CD4-positive, alpha-beta T cell (primary cell): ENCODE measurements at regions of chr20 and their contacts with region 1.

Region 1: GRCh38 chr20:57596998-57597939 is 23.0 kb downstream of the ZBP1 start:
- DNase-seq: peak; percentile 58 to 88 (median 71)
- ATAC-seq: peak; percentile 85
- H3K4me3 ChIP-seq: peak overlapping the region; percentile 20
- H3K4me3 Mint-ChIP-seq: no peak overlapping the region
- H3K27ac ChIP-seq: no peak overlapping the region
- H3K27ac Mint-ChIP-seq: no peak overlapping the region
- H3K4me1 ChIP-seq: peaks cover 16% of the 10 kb centered on the region
- H3K4me1 Mint-ChIP-seq: no peaks in the 10 kb centered on the region
- H3K27me3 ChIP-seq: no peaks in the 10 kb centered on the region
- H3K27me3 Mint-ChIP-seq: peaks cover 5% of the 10 kb centered on the region
- CTCF ChIP-seq: peak; percentile 94

Region 2: DNA sequence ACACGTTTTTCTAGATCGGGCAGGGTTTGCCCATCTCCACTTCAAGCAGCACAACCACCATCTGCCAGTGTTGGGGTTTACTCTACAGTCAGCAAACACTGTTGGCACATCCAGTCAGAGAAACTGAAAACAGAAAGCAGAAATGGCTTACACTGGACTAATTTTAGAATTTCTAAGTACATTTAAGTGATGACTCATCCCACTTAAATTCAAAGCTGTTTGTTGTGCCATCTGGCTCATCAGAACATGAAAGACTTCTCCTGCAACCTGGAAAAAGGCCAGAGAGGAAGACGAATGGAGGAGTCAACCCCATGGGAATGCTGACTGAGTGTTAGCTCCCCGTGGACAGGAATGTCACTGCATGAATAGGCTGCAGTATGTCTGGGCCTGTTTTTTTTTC is 1042.4 kb before region 1 on chr20:
- CTCF ChIA-PET with region 1: interaction called, 3 read pairs
- POLR2A ChIA-PET with region 1: no interaction called
- intact Hi-C with region 1: loop called (anchors 2 kb)
- DNase-seq: peak in 3 of 14 experiments; percentile 16 to 29 (median 23)
- ATAC-seq: no peak
- H3K4me3 ChIP-seq: no peak overlapping the region
- H3K4me3 Mint-ChIP-seq: no peak overlapping the region
- H3K27ac ChIP-seq: no peak overlapping the region
- H3K27ac Mint-ChIP-seq: no peak overlapping the region
- H3K4me1 ChIP-seq: no peaks in the 10 kb centered on the region
- H3K4me1 Mint-ChIP-seq: no peaks in the 10 kb centered on the region
- H3K27me3 ChIP-seq: no peaks in the 10 kb centered on the region
- H3K27me3 Mint-ChIP-seq: no peaks in the 10 kb centered on the region
- CTCF ChIP-seq: no peak

Region 3: DNA sequence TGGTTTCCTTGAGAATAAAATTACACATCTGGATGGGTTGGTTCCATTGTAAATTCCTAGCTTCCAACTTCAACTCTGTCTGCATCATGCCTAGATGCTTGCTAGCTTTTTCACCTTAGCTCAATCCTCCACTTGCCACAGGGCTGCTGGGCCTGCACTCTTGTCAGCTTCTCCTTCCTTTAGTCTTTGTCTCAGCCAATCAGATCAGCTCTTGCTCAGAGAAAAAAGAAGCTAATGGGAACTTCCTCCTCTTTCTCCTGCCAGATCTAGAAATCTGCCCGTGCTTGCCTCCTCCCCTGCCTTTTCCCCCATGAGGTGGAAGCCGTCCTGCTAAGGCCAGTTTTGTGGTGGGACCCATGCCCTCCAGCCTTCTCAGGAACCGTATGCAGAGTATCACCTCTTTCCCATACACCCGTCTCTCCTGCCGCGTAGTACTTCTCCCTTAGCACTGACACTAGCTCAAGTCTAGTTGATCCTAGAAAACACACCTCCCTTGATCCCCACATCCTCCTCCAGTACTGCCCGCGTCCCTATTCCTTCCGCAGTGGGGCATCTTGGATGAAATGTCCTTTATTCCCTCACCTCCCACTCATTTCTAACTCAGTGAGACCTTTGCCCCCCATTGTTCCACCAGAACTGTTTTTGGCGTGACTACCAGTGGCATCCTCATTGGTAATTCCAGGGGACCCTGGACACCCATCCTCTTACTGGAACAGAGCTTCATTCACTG is 227.5 kb before region 1 on chr20:
- CTCF ChIA-PET with region 1: no interaction called
- POLR2A ChIA-PET with region 1: no interaction called
- intact Hi-C with region 1: no loop called
- DNase-seq: no peak
- ATAC-seq: no peak
- H3K4me3 ChIP-seq: no peak overlapping the region
- H3K4me3 Mint-ChIP-seq: no peak overlapping the region
- H3K27ac ChIP-seq: no peak overlapping the region
- H3K27ac Mint-ChIP-seq: no peak overlapping the region
- H3K4me1 ChIP-seq: peaks cover 8% of the 10 kb centered on the region
- H3K4me1 Mint-ChIP-seq: peaks cover 16% of the 10 kb centered on the region
- H3K27me3 ChIP-seq: no peaks in the 10 kb centered on the region
- H3K27me3 Mint-ChIP-seq: no peaks in the 10 kb centered on the region
- CTCF ChIP-seq: no peak

Region 4: DNA sequence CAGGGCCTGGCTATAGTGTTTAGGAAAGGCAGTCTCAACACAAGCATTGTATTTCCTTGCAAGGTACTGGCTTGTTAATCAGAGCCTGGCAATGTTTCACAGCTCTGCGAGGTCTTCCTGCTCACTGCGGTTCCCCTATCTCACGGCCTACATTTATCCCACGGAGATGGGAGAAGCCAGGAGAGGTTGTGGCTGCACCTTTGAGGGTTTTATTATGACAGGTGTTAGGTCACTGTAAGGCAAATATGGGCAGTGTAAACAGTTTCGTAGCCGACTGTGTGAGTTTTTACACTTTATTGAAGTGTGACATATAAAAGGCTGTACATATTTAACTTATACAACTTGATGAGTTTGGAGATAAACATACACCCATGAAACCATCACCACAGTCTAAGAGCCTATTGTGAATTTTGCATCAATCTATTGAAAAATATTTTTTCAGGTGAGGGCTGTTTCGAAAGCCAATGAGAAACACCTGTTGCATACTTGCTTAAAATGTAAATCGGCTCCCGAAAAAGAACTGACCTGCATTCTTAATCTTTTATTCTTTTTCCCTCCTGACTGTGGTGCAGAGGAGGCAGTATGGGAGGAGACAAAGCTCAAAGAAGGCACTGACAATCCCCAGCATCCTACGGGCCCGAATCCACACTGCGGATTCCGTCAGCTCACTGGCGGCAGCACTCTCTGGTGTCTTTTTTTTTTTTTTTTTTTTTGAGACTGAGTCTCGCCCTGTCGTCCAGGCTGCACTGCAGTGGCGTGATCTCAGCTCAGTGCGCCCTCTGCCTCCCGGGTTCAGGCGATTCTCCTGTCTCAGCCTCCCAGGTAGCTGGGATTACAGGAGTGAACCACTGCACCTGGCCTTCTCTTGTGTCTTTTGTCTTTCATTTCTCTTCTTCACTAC is 213.6 kb before region 1 on chr20:
- CTCF ChIA-PET with region 1: interaction called, 3 read pairs
- POLR2A ChIA-PET with region 1: no interaction called
- intact Hi-C with region 1: loop called (anchors 2 to 5 kb)
- DNase-seq: peak in 1 of 14 experiments; percentile 30
- ATAC-seq: no peak
- H3K4me3 ChIP-seq: no peak overlapping the region
- H3K4me3 Mint-ChIP-seq: no peak overlapping the region
- H3K27ac ChIP-seq: no peak overlapping the region
- H3K27ac Mint-ChIP-seq: no peak overlapping the region
- H3K4me1 ChIP-seq: peaks cover 16% of the 10 kb centered on the region
- H3K4me1 Mint-ChIP-seq: peaks cover 23% of the 10 kb centered on the region
- H3K27me3 ChIP-seq: no peaks in the 10 kb centered on the region
- H3K27me3 Mint-ChIP-seq: no peaks in the 10 kb centered on the region
- CTCF ChIP-seq: no peak

Region 5: DNA sequence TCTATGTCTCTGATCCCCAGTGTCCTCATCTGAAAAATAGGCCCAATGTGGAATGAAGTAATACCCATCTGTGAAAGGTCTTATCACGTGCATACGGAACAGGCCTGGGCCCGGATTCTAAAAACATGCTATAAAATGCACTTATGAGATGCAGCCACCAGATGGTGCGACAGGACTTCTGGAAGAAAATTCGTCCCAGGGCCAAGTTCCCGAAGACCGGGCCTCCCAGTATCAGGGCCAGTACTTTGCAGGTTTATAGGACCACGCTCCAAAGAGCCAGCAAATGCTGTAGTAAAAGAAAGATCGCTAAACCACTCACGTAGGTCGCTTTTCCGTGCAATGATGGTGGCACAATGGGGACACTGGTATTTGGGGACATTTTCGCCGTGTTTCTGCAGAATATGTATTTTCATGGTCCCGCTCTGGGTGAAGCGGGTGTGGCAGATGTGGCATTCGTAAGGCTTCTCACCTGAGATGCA is 83.0 kb before region 1 on chr20:
- CTCF ChIA-PET with region 1: no interaction called
- POLR2A ChIA-PET with region 1: no interaction called
- intact Hi-C with region 1: loop called (anchors 5 kb)
- DNase-seq: peak in 7 of 14 experiments; percentile 5 to 63 (median 27)
- ATAC-seq: no peak
- H3K4me3 ChIP-seq: no peak overlapping the region
- H3K4me3 Mint-ChIP-seq: no peak overlapping the region
- H3K27ac ChIP-seq: no peak overlapping the region
- H3K27ac Mint-ChIP-seq: no peak overlapping the region
- H3K4me1 ChIP-seq: no peaks in the 10 kb centered on the region
- H3K4me1 Mint-ChIP-seq: no peaks in the 10 kb centered on the region
- H3K27me3 ChIP-seq: peaks cover 7 to 9% of the 10 kb centered on the region in 2 experiments
- H3K27me3 Mint-ChIP-seq: peaks cover 19% of the 10 kb centered on the region
- CTCF ChIP-seq: peak; percentile 51

Region 6: DNA sequence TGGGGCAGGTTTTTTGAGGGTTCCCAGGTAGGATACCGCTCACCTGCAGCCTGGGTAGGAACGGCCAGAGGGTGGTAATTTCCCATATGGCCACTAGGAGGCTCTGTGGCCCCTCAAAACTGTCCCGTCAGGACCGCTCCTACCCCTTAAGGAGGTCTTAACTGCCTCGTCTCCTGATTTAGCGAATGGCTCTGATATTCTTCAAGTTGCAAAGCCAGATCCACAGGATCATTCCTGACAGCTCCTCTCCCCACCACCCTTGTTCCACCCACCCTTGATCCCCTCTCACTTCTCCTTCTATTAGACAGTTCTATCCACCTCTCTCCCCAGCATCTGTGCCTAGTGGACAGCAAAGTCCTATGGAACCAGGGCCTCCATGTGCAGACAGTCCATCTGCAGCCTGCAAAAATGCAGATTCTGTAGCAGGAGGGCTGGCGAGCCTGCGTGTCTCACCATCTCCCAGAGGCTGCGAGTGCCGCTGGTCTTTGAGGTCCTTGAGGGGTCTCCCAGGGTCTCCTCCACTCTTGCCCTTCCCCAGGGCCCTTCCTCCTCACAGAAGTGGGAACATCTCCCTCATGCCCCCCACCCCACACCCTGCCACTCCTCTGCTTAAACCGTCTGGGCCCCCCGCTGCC is 57.2 kb after region 1 on chr20:
- CTCF ChIA-PET with region 1: interaction called, 4 read pairs
- POLR2A ChIA-PET with region 1: no interaction called
- intact Hi-C with region 1: loop called (anchors 1 to 5 kb)
- DNase-seq: peak; percentile 33 to 81 (median 53)
- ATAC-seq: peak; percentile 69
- H3K4me3 ChIP-seq: no peak overlapping the region
- H3K4me3 Mint-ChIP-seq: no peak overlapping the region
- H3K27ac ChIP-seq: no peak overlapping the region
- H3K27ac Mint-ChIP-seq: peak overlapping the region; percentile 34
- H3K4me1 ChIP-seq: peaks cover 26% of the 10 kb centered on the region
- H3K4me1 Mint-ChIP-seq: peaks cover 37% of the 10 kb centered on the region
- H3K27me3 ChIP-seq: no peaks in the 10 kb centered on the region
- H3K27me3 Mint-ChIP-seq: no peaks in the 10 kb centered on the region
- CTCF ChIP-seq: peak; percentile 91

Region 7: GRCh38 chr20:58087193-58087858 is 490.1 kb after region 1 on chr20:
- CTCF ChIA-PET with region 1: interaction called, 3 read pairs
- POLR2A ChIA-PET with region 1: no interaction called
- intact Hi-C with region 1: loop called in 1 of 2 experiments (anchors 5 kb)
- DNase-seq: peak in 5 of 14 experiments; percentile 7 to 29 (median 22)
- ATAC-seq: no peak
- H3K4me3 ChIP-seq: no peak overlapping the region
- H3K4me3 Mint-ChIP-seq: no peak overlapping the region
- H3K27ac ChIP-seq: no peak overlapping the region
- H3K27ac Mint-ChIP-seq: no peak overlapping the region
- H3K4me1 ChIP-seq: no peaks in the 10 kb centered on the region
- H3K4me1 Mint-ChIP-seq: no peaks in the 10 kb centered on the region
- H3K27me3 ChIP-seq: no peaks in the 10 kb centered on the region
- H3K27me3 Mint-ChIP-seq: peaks cover 14% of the 10 kb centered on the region
- CTCF ChIP-seq: peak; percentile 40

Region 8: GRCh38 chr20:58209652-58210397 is 612.6 kb after region 1 on chr20:
- CTCF ChIA-PET with region 1: interaction called, 3 read pairs
- POLR2A ChIA-PET with region 1: no interaction called
- intact Hi-C with region 1: loop called (anchors 1 kb)
- DNase-seq: peak; percentile 72 to 93 (median 86)
- ATAC-seq: peak; percentile 80
- H3K4me3 ChIP-seq: no peak overlapping the region
- H3K4me3 Mint-ChIP-seq: no peak overlapping the region
- H3K27ac ChIP-seq: no peak overlapping the region
- H3K27ac Mint-ChIP-seq: peak overlapping the region; percentile 51
- H3K4me1 ChIP-seq: peaks cover 9% of the 10 kb centered on the region
- H3K4me1 Mint-ChIP-seq: no peaks in the 10 kb centered on the region
- H3K27me3 ChIP-seq: peaks cover 0 to 9% of the 10 kb centered on the region in 2 experiments
- H3K27me3 Mint-ChIP-seq: peaks cover 4% of the 10 kb centered on the region
- CTCF ChIP-seq: peak; percentile 100